ENCODE measurements at regions of chr7 and their contacts with region 1.

Region 1: DNA sequence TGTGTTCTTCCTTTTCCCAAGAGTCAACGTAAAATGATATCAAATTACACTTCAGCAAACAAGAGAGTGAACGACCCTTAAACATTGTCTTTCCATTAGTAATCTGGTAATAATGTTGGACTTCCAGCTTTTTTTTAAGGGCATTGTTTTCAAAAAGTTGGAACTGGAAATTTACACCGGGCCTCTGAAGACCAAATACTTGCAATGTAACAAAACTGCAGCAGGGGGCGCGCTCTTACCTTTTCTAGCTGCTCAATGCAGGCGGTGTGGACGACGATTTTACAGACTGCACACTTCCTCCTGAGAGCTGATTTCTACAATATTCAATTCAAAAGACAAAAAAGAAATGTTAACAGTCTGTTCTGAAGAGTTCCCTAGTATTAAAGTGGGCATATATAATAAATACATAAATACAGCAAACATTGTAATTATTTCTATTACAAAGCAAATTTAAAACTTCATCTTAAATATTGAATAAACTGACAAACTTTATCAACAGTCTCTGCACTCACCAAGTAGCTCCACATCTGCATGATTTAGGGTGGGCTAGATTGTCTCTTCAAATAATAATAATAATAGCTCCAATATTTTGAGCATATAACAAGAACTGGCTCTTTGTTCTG is 190.4 kb downstream of the DGKI start:
- H3K4me3 ChIP-seq: no peak overlapping the region
- H3K27ac ChIP-seq: no peak overlapping the region
- H3K4me1 ChIP-seq: no peaks in the 10 kb centered on the region
- CTCF ChIP-seq: no peak

Region 2: DNA sequence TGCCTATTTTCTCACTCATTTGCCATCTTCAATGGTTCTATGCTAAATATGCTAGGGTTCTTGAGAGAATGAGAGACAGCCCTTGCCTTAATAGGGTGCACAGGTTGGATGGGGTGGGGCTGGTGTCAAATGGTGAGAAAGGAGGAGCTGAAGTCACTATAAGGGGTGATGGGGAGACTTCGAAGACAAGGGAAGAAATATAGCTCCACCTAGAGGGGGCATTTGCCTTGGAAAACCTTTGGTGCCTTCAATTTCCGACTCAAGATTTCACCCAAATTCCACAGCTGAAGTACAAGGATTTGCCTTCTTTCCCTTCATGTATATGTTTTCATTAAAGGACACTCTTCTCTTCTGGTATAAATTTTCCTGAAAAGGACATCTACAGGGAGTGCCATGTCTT is 318.4 kb before region 1 on chr7:
- CTCF ChIA-PET with region 1: no interaction called
- POLR2A ChIA-PET with region 1: no interaction called
- H3K4me3 ChIP-seq: no peak overlapping the region
- H3K27ac ChIP-seq: no peak overlapping the region
- H3K4me1 ChIP-seq: no peaks in the 10 kb centered on the region
- CTCF ChIP-seq: no peak

Region 3: DNA sequence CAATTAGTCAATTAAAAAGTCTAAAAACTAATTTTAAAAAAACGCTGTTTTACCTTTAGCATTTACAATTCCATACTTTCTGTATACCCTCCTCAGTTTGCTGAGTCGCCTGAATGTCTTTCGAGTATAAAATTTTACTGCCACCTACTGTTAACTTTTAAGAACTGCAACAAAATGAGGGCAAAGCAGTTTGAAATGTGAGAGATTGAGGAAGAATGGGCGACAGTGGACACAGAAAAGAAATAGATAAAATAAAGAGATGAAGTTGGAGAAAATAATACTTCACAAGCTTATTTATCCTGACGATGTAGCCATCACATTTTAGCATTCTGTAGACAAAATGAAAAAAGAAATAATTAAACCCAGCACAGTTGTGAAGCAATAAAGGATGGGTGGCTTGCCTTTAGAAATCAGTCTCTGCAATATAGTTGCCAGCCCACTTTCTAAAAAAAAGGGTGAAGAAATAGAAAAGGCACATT is 202.1 kb before region 1 on chr7:
- CTCF ChIA-PET with region 1: no interaction called
- POLR2A ChIA-PET with region 1: no interaction called
- H3K4me3 ChIP-seq: no peak overlapping the region
- H3K27ac ChIP-seq: no peak overlapping the region
- H3K4me1 ChIP-seq: no peaks in the 10 kb centered on the region
- CTCF ChIP-seq: no peak

Region 4: GRCh38 chr7:137626469-137627067 is 29.8 kb before region 1 on chr7:
- CTCF ChIA-PET with region 1: interaction called, 17 read pairs
- POLR2A ChIA-PET with region 1: interaction called, 3 read pairs
- H3K4me3 ChIP-seq: no peak overlapping the region
- H3K27ac ChIP-seq: no peak overlapping the region
- H3K4me1 ChIP-seq: no peaks in the 10 kb centered on the region
- CTCF ChIP-seq: no peak

Region 5: GRCh38 chr7:137882261-137882668 is 225.9 kb after region 1 on chr7:
- CTCF ChIA-PET with region 1: interaction called, 12 read pairs
- POLR2A ChIA-PET with region 1: no interaction called
- H3K4me3 ChIP-seq: no peak overlapping the region
- H3K27ac ChIP-seq: no peak overlapping the region
- H3K4me1 ChIP-seq: no peaks in the 10 kb centered on the region
- CTCF ChIP-seq: no peak

Region 6: DNA sequence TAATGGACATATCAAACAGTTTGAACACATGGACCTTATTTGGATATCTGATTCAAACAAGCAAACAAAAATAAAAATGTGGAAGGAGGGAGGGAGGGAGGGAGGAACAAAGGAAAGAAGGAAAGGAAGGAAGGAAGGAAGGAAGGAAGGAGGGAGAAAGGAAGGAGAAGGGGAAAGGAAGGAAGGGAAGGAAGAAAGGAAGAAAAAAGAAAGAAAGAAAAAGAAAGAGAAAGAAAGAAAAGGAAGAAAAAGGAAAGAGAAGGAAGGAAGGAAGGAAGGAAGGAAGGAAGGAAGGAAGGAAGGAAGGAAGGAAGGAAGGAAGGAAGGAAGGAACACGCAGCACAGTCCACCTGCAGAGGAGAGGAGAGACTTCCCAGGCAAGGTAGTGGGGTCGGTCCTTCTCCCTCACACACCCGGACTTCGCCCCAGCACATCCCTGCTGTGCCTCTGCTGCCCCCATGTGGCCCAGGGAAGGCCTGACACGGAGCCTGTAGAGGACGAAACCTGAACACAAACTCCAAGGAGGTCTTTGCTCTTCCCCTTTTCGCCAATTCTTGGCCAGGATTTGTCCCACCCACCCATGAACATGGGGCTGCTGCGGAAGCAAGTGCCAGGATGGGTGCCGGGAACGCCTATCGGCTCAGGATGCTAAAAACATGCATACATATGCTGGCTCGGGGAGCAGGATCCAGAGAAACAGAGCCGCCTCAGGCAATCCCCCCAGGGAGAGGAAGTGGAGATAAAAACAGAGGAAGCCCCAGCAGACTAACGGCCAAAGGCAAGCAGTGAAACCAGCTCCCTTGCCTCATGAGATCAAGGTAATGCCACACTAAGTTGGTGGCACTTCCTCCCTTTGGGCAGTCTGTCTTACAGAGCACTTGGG is 242.7 kb after region 1 on chr7:
- CTCF ChIA-PET with region 1: interaction called, 68 read pairs
- POLR2A ChIA-PET with region 1: no interaction called
- H3K4me3 ChIP-seq: no peak overlapping the region
- H3K27ac ChIP-seq: no peak overlapping the region
- H3K4me1 ChIP-seq: no peaks in the 10 kb centered on the region
- CTCF ChIP-seq: peak; percentile 93

Region 7: GRCh38 chr7:137934941-137935883 is 278.9 kb after region 1 on chr7:
- CTCF ChIA-PET with region 1: no interaction called
- POLR2A ChIA-PET with region 1: no interaction called
- H3K4me3 ChIP-seq: no peak overlapping the region
- H3K27ac ChIP-seq: no peak overlapping the region
- H3K4me1 ChIP-seq: peaks cover 2% of the 10 kb centered on the region; the same call in 1 of the 2 replicates
- CTCF ChIP-seq: no peak